Left cardiac atrium (tissue), 4 donors: ENCODE measurements at regions of chr1 and their contacts with region 1.

Region 1: DNA sequence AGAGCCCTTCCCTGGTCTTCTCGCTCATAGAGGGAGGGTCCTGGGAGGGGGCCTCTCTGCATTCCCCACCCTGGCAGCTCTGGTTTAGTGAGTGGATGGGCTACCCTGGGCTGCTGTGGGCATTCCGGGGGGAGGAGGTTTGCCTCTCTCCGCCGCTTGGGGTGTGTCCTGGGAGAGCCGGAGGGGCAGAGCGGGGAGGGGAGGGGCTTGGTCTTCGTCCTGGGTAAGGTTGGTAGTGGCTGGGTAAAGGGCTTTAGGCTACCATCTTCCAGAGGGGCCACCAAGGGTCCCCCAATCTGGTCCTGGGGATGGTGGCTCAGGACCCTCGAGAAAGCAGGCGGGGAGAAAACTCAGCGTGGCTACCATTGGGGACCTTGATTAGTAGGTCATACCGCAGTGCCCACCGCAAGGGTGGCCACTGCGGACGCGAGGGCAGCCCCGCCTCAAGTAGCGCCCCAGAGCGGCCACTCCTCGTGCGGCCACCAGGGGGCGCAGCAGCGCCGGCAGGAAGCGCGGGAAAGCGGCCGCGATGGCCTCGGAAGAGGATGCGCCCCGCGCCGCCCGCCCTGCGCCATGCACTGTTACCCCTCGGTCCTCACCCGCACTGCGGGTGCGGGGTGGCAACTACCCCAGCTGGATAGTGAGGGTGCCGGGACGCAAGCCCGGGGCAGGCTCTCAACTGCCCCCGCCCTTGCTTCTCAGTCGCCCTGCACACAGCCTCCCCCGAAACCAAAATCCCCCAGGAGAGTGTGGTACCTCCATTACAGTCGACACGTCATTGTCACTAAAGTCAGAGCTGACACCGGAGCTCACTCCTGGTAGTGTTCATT is 44.1 kb upstream of the SLC25A33 start:
- DNase-seq: peak; percentile 59
- ATAC-seq: peak; percentile 69 to 81

Region 2: DNA sequence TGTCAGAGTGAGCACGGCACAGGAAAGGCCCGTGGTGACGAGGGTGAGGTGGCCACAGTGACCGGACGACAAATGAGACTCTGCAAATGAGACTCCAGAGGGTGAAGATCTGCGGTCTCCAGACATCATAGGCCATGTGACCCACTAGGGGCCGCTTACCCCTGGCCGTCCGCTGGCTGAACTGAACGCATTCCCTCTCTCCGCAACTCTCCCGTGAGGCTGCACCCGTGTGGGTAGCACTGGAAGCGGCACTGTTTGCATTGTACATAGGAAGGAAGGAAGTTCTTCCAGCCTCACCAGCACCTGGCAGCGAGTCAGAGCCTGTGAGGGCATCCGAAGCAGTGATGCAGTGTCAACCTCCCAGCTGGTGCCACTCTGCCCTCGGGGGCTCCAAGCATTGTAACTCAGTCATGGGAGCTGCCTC is 226.1 kb before region 1 on chr1:
- intact Hi-C with region 1: loop called in 1 of 2 experiments (anchors 5 kb)
- DNase-seq: no peak
- ATAC-seq: no peak

Region 3: GRCh38 chr1:9286556-9286955 is 208.6 kb before region 1 on chr1:
- intact Hi-C with region 1: loop called in 1 of 2 experiments (anchors 2 kb)
- DNase-seq: no peak
- ATAC-seq: no peak

Region 4: GRCh38 chr1:9573723-9574122 is 78.6 kb after region 1 on chr1:
- intact Hi-C with region 1: loop called (anchors 2 to 5 kb)
- DNase-seq: no peak
- ATAC-seq: peak; percentile 54

Region 5: GRCh38 chr1:9588551-9589143 is 93.5 kb after region 1 on chr1 and contains the start of gene TMEM201:
- intact Hi-C with region 1: no loop called
- DNase-seq: peak; percentile 96
- ATAC-seq: peak; percentile 93 to 96
- total RNA-seq, gene TMEM201: 18.5 to 21.2 TPM